Activated T-helper 1 cell treated with anti-CD3 and anti-CD28 coated beads, Interleukin-12 subunit alpha, Interleukin-12 subunit beta, Interleukin-2, Interleukin-4 antibody, amounts not matched to agents 30 ng/mL and 10 ng/mL and 1 ng/mL, durations not matched to agents 14 hours and 24 hours and 36 hours (primary cell): ENCODE measurements at regions of chr9 and their contacts with region 1.

Region 1: DNA sequence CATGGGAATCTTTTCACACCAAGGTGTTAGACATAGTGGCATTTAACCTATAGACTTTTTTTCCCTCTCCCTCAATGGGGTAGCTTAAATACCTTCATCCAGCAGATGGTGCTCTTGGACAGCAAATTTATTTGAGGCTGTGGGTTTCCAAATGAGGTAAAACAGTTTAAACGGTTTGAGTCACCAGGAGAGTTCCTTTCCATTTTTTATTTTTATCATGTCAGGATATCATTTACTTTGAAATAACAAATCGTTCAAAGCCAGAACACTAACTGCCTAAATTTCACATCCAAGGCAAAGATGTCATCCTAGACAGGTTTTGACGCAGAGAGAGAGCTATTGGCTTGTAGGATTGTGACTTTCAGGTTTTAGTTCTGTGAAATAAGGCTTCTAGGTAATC is 69.7 kb downstream of the KDM4C start:
- DNase-seq: peak; percentile 27
- H3K4me3 Mint-ChIP-seq: no peak overlapping the region
- H3K27ac Mint-ChIP-seq: peak overlapping the region; percentile 57
- H3K4me1 Mint-ChIP-seq: peaks cover 10% of the 10 kb centered on the region
- H3K27me3 Mint-ChIP-seq: no peaks in the 10 kb centered on the region

Region 2: GRCh38 chr9:7186175-7186574 is 358.7 kb after region 1 on chr9:
- intact Hi-C with region 1: loop called (anchors 1 kb)
- DNase-seq: no peak
- H3K4me3 Mint-ChIP-seq: no peak overlapping the region
- H3K27ac Mint-ChIP-seq: no peak overlapping the region
- H3K4me1 Mint-ChIP-seq: no peaks in the 10 kb centered on the region
- H3K27me3 Mint-ChIP-seq: no peaks in the 10 kb centered on the region